Activated B cell treated with CpG ODN at 0.5 μM for 24 hours (primary cell): ENCODE measurements at regions of chr10 and their contacts with region 1.

Region 1: DNA sequence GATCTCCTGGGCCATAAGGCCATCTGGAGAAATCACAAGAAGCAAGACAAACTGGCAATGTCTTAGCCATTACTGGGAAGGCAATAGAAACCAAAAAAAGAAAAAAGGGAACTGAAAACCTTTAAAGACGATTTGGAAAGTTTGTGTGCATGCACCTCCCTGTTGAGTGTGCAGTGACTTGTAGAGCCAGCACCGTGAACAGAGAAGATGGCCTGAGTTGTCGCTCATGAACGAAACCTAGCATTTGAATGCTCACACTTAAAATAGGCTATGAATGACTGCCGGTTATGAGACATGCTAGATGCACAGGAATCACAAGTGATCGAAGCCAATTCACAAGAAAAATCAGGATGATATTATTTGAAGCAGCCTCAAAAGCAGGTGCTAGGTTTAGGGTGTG is 151.3 kb upstream of the ADO start:
- DNase-seq: no peak
- ATAC-seq: peak; percentile 92
- H3K4me3 Mint-ChIP-seq: peak overlapping the region; percentile 55
- H3K27ac Mint-ChIP-seq: peak overlapping the region; percentile 87
- H3K4me1 Mint-ChIP-seq: peaks cover 66% of the 10 kb centered on the region
- H3K27me3 Mint-ChIP-seq: peaks cover 1% of the 10 kb centered on the region
- CTCF ChIP-seq: no peak

Region 2: DNA sequence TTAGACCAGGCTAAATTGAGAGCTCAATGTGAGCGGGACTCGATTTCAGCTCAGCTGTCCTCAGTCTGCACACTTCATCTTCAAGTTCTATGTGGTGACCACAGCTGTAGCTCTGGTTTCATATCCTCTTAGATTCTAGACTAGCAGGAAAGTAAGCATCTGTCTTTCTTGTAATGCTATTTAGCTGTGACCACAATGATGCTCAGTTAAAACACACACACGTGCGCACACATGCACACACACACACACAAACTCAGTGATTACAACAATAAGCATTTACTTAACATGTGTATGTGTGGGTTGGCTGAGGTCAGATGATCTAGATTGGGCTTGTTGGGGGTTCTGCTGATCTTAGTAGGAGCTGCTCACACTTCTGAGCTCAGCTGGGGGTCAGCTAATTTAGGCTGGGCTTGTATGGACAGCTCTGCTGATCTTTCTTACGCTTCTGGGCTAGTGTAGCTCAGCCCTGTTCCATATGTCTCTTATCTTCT is 196.6 kb before region 1 on chr10:
- CTCF ChIA-PET with region 1: no interaction called
- POLR2A ChIA-PET with region 1: no interaction called
- intact Hi-C with region 1: loop called (anchors 1 kb)
- DNase-seq: peak; percentile 22
- ATAC-seq: peak; percentile 93
- H3K4me3 Mint-ChIP-seq: peak overlapping the region; percentile 53
- H3K27ac Mint-ChIP-seq: peak overlapping the region; percentile 74
- H3K4me1 Mint-ChIP-seq: peaks cover 39% of the 10 kb centered on the region
- H3K27me3 Mint-ChIP-seq: no peaks in the 10 kb centered on the region
- CTCF ChIP-seq: no peak

Region 3: GRCh38 chr10:62560199-62560819 is 92.9 kb before region 1 on chr10:
- CTCF ChIA-PET with region 1: no interaction called
- POLR2A ChIA-PET with region 1: no interaction called
- intact Hi-C with region 1: no loop called
- DNase-seq: no peak
- ATAC-seq: no peak
- H3K4me3 Mint-ChIP-seq: no peak overlapping the region
- H3K27ac Mint-ChIP-seq: no peak overlapping the region
- H3K4me1 Mint-ChIP-seq: peaks cover 13% of the 10 kb centered on the region
- H3K27me3 Mint-ChIP-seq: peaks cover 3% of the 10 kb centered on the region
- CTCF ChIP-seq: no peak

Region 4: GRCh38 chr10:62597226-62597625 is 56.0 kb before region 1 on chr10:
- CTCF ChIA-PET with region 1: no interaction called
- POLR2A ChIA-PET with region 1: no interaction called
- intact Hi-C with region 1: no loop called
- DNase-seq: no peak
- ATAC-seq: no peak
- H3K4me3 Mint-ChIP-seq: no peak overlapping the region
- H3K27ac Mint-ChIP-seq: no peak overlapping the region
- H3K4me1 Mint-ChIP-seq: peaks cover 14% of the 10 kb centered on the region
- H3K27me3 Mint-ChIP-seq: no peaks in the 10 kb centered on the region
- CTCF ChIP-seq: no peak

Region 5: DNA sequence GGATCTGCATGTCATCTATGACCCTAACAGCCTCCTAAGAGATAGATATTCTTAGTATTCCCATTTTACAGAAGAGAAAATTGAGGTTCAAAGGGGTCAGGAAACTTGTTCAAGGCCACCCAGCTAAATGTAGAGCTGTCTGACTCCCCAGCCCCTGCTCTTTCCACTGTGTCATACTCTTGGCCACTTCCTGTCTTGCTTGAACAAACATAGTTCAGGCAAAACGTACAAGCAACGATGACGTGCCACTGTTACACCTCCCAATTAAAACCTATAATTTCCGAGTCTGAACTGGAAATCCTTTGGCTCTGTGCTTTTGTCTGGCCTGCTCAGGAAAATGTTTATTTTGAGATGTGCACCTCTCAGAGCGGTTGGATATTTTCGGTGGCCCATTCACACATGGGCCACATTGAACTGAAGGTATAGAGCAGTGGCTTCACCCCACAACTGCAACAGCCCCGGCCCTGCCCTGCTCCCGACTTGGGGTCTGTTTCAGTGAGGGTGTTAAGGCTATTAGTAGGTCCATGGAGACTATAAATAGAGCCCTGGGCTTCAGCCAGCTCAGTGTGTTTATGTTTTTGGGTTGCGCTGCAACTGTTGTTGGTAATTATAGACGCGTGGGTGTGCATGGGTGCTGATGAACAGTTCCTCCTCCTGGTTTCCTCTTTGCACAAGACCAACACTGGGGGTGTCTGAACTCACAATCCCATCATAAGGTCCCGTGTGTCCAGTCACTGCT is 21.0 kb before region 1 on chr10:
- CTCF ChIA-PET with region 1: no interaction called
- POLR2A ChIA-PET with region 1: interaction called, 9 read pairs
- intact Hi-C with region 1: loop called (anchors 1 kb)
- DNase-seq: no peak
- ATAC-seq: peak; percentile 81
- H3K4me3 Mint-ChIP-seq: peak overlapping the region; percentile 83
- H3K27ac Mint-ChIP-seq: peak overlapping the region; percentile 98
- H3K4me1 Mint-ChIP-seq: peaks cover 58% of the 10 kb centered on the region
- H3K27me3 Mint-ChIP-seq: no peaks in the 10 kb centered on the region
- CTCF ChIP-seq: no peak

Region 6: DNA sequence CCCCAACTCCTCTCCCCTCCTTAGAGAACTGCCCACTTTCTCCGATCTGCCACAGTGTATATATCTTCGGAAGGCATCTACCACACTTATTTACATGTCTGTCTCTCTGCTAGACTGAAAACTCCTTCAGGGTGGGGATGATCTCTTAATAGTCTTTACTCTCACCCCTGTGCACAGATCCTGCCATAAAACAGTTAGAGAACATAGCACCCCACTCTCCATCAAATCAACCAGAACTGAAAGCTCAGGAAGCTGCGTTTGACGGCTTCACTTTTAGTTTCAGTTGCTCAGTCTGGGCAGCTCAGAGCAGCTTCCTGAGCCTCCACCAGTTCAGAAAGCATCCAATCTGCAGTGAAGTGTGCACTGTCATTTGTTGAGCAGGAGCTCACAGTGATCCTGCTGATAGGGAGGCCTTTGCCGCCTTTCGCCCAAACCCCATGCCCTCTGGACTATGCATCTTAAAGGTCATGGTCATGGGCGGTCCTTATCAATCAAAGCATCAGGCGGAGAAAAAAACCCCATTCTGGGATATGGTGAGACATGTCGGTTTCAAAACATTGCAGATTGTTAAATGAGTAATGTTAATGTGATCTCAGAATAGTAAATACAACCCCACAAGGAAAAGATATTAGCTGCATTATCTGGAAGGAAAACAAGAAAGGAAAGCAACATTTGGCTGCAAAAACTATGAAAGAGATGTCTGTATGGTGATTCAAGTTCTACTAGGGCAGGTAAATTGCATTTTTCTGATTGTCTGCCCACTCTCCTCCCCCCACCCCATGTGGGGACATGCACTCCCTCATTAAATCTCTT is 15.8 kb before region 1 on chr10:
- CTCF ChIA-PET with region 1: no interaction called
- POLR2A ChIA-PET with region 1: interaction called, 9 read pairs
- intact Hi-C with region 1: loop called (anchors 1 kb)
- DNase-seq: no peak
- ATAC-seq: peak; percentile 71
- H3K4me3 Mint-ChIP-seq: no peak overlapping the region
- H3K27ac Mint-ChIP-seq: no peak overlapping the region
- H3K4me1 Mint-ChIP-seq: peaks cover 38% of the 10 kb centered on the region
- H3K27me3 Mint-ChIP-seq: no peaks in the 10 kb centered on the region
- CTCF ChIP-seq: no peak

Region 7: DNA sequence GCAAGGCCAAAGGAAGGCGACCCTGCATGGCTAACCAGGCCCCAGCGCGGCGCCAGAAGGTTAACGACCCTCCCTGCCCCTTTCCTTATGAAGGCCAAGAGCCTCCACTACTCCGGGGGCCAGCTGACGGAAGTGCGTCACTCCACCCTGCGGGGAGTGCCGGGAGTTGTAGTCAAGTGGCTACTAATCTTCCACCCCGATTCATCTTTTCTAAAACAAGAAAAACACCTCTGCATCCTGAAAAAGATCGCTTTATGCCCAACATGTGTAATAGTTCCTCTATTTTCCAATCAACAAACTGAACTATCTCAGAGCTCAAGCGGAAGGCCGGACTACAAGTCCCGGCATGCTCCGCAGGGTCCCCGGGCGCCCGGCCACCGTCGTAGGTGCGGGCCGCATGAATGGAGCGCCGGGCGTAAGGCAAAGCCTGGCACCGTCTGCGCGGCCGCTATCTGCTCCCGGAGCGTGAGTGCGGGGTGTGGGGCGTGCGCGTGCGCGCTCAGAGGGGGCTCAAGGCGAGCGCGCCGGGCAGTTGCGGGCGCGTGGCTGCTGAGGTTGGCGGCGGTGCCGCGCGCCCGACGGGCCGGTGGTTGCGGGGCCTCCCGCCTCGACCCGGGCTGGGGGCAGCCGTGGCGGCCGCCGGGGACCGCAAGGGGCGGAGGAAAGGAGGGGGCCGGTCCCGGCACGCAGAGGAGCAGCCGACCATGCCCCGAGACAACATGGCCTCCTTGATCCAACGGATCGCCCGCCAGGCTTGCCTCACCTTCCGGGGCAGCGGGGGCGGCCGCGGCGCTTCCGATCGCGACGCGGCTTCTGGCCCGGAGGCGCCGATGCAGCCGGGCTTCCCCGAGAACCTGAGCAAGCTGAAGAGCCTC is 151.3 kb after region 1 on chr10 and contains the start of gene ADO:
- CTCF ChIA-PET with region 1: no interaction called
- POLR2A ChIA-PET with region 1: interaction called, 5 read pairs
- intact Hi-C with region 1: loop called (anchors 1 kb)
- DNase-seq: peak; percentile 77
- ATAC-seq: peak; percentile 87
- H3K4me3 Mint-ChIP-seq: peak within 1 kb of the TSS; percentile 95
- H3K27ac Mint-ChIP-seq: peak within 1 kb of the TSS; percentile 99
- H3K4me1 Mint-ChIP-seq: peaks cover 41% of the 10 kb centered on the region
- H3K27me3 Mint-ChIP-seq: no peaks in the 10 kb centered on the region
- CTCF ChIP-seq: no peak
- total RNA-seq, gene ADO: 21.6 and 21.7 TPM in 2 replicates